Sigmoid colon (tissue), 7 donors: ENCODE measurements at regions of chr9 and their contacts with region 1.

Region 1: DNA sequence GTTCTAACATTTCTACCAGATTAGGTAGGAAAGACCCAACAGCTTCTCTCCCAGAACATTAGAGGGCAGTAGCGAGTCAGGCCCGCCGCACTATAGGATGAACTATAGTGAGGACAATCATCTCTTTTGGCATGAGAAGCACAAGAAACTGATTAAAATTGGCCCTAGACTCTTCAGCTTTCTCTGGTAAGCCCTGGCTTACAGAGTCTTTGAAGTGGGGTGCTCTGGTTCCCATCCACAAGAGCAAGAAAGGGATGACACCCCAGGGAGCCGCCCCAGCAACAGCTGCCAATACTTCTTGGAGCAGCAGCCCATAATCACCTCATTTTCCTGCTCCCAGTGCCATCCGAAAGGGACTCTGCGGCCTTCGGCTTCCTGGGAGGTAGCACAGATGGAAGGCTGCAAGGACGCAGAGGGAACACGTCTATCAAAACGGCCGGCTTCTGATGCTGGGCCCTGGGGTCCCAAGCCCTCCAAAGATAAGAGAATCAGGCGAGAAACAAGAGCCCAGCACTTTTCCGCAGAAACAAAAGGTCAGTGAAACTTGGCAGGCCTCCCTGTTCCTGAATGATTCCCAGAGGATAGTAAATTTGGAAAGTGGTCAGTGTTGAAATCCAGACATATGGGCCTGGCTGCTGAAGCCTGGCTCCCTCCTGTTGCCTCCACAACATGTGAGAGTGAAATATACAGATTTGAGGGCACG is 69.3 kb downstream of the HSD17B3 start:
- DNase-seq: peak; percentile 89
- H3K4me3 ChIP-seq: no peak overlapping the region
- H3K27ac ChIP-seq: peak overlapping the region; percentile 48 to 75 (median 70)
- H3K4me1 ChIP-seq: peaks cover 0 to 15% (median 9%) of the 10 kb centered on the region in 4 donors
- H3K27me3 ChIP-seq: no peaks in the 10 kb centered on the region
- CTCF ChIP-seq: peak in 3 of 4 experiments; percentile 73 to 89 (median 79)
- EP300 ChIP-seq: no peak
- POLR2A ChIP-seq: no peak

Region 2: GRCh38 chr9:96317335-96317980 is 84.8 kb after region 1 on chr9:
- intact Hi-C with region 1: loop called (anchors 1 kb)
- DNase-seq: peak; percentile 70
- H3K4me3 ChIP-seq: no peak overlapping the region
- H3K27ac ChIP-seq: no peak overlapping the region
- H3K4me1 ChIP-seq: peaks cover 0 to 4% (median 2%) of the 10 kb centered on the region in 4 donors
- H3K27me3 ChIP-seq: no peaks in the 10 kb centered on the region
- CTCF ChIP-seq: peak; percentile 42 to 87 (median 72)
- EP300 ChIP-seq: no peak
- POLR2A ChIP-seq: no peak

Region 3: DNA sequence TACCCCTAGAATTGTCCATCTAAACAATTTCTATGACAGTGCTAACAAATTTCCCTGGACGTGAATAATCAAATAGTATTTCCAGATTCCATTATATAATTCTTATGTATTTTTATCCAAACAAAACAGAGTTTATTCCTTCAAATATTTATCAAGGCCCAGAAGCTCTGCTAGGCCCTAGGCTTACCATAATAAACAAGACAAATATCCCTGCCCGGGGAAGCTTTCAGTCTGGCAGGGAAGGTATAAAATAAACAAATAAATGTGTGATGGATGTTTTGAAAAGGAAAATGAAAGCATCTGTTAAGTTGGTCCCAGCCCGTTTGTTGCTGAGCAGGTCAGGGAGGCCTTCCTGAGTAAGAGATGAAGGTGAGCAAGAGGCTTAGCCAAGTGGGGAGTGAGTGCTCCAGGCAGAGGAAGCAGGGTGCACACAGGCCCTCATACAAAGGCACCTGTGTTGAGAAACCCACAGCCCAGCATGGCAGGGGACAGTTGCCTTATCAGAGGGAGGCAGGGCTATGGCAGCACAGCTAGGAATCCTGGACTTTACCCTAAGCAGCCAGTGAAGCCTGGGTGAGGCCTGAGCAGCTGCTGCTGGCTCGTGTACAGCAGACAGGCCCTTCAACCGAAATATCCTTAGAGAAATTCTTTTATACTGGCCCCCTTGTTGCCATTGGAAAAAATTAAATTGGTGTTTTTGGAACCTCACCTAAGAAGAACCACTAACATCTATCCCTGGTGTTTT is 158.5 kb after region 1 on chr9:
- intact Hi-C with region 1: no loop called
- DNase-seq: peak; percentile 60
- H3K4me3 ChIP-seq: no peak overlapping the region
- H3K27ac ChIP-seq: peak overlapping the region in 1 of 4 donors; percentile 11
- H3K4me1 ChIP-seq: no peaks in the 10 kb centered on the region
- H3K27me3 ChIP-seq: no peaks in the 10 kb centered on the region
- CTCF ChIP-seq: no peak
- EP300 ChIP-seq: no peak
- POLR2A ChIP-seq: no peak

Region 4: GRCh38 chr9:96418074-96418809 is 185.6 kb after region 1 on chr9 and contains the start of gene ZNF367:
- intact Hi-C with region 1: no loop called
- DNase-seq: peak; percentile 99
- H3K4me3 ChIP-seq: peak within 1 kb of the TSS; percentile 66 to 92 (median 82)
- H3K27ac ChIP-seq: peak within 1 kb of the TSS; percentile 98 to 100 (median 98)
- H3K4me1 ChIP-seq: peaks cover 0 to 37% (median 28%) of the 10 kb centered on the region in 4 donors
- H3K27me3 ChIP-seq: no peaks in the 10 kb centered on the region
- CTCF ChIP-seq: no peak
- EP300 ChIP-seq: no peak
- POLR2A ChIP-seq: no peak
- total RNA-seq, gene ZNF367: 0.28 to 1.4 (median 1.3) TPM

Region 5: GRCh38 chr9:96667361-96667728 is 434.7 kb after region 1 on chr9:
- intact Hi-C with region 1: loop called (anchors 5 kb)
- DNase-seq: no peak
- H3K4me3 ChIP-seq: no peak overlapping the region
- H3K27ac ChIP-seq: no peak overlapping the region
- H3K4me1 ChIP-seq: no peaks in the 10 kb centered on the region
- H3K27me3 ChIP-seq: no peaks in the 10 kb centered on the region
- CTCF ChIP-seq: no peak
- EP300 ChIP-seq: no peak
- POLR2A ChIP-seq: no peak